AG04449 (cell line): ENCODE measurements at regions of chr2 and their contacts with region 1.

Region 1: GRCh38 chr2:182186132-182186735 is 200.6 kb downstream of the PPP1R1C start:
- DNase-seq: no peak
- H3K4me3 ChIP-seq: no peak overlapping the region
- CTCF ChIP-seq: peak; percentile 22

Region 2: GRCh38 chr2:182163878-182164277 is 22.4 kb before region 1 on chr2:
- CTCF ChIA-PET with region 1: no interaction called
- POLR2A ChIA-PET with region 1: no interaction called
- DNase-seq: no peak
- H3K4me3 ChIP-seq: no peak overlapping the region
- CTCF ChIP-seq: no peak

Region 3: DNA sequence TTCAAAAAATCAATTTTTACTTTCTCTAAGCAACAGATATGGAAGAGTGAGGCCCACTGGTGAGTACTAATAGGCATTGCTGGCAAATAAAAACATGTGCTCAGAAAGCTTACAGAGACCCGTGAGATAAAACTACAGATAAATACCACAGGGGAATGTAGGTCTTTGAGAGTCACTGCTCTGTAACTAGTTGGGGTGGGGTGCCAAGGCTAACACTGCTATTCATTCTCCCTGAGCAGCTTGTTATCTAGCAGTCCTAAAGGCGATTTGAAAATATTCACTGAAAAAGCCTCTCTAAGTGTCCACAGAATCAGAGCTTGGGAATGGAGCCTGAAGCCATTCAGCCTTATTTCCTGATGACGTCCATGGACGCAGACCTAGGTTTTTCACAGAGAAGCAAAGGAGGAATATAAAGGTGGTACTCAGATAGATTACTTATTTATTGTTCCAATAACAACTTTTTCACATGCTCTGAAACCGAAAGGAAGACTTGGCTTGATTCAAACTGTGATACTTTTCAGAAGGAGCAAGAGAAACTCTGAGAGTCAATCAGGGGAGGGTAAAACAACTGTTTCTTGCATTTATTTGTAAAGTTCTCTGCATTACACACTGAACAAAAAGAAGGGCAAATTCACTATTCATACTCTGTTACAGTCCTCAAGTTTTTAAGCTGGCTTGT is 12.2 kb before region 1 on chr2:
- CTCF ChIA-PET with region 1: interaction called, 13 read pairs
- POLR2A ChIA-PET with region 1: no interaction called
- DNase-seq: no peak
- H3K4me3 ChIP-seq: no peak overlapping the region
- CTCF ChIP-seq: no peak

Region 4: GRCh38 chr2:182642328-182642727 is 456.1 kb after region 1 on chr2:
- CTCF ChIA-PET with region 1: interaction called, 135 read pairs
- POLR2A ChIA-PET with region 1: no interaction called
- DNase-seq: no peak
- H3K4me3 ChIP-seq: no peak overlapping the region
- CTCF ChIP-seq: no peak

Region 5: DNA sequence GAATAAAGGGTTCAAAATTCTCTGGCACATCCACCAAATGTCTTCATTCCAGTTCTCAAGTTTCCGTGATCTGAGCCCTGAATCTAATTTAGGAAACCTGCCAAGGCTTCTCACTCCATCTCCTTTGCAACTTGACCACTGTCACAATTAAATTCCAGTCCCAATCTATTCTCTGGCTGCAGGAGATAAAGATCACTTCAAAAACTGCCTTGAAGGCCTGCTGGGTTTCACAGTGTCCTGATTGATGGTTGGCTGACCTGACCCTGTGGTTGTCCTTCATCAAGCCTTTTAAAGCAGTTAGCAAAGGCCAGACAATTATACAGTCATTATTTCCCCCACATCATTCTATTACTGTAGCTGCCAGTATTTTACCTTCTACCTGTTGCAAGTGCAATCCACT is 469.5 kb after region 1 on chr2:
- CTCF ChIA-PET with region 1: interaction called, 61 read pairs
- POLR2A ChIA-PET with region 1: no interaction called
- DNase-seq: no peak
- H3K4me3 ChIP-seq: no peak overlapping the region
- CTCF ChIP-seq: no peak